CD14-positive monocyte (primary cell): ENCODE measurements at regions of chr16 and their contacts with region 1.

Region 1: GRCh38 chr16:89442990-89443731 is 47.2 kb downstream of the ANKRD11 start:
- DNase-seq: no peak
- H3K4me3 ChIP-seq: no peak overlapping the region
- H3K4me3 Mint-ChIP-seq: no peak overlapping the region
- H3K27ac ChIP-seq: peak overlapping the region in 1 of 2 donors; percentile 35
- H3K27ac Mint-ChIP-seq: peak overlapping the region in 6 of 7 donors; percentile 21 to 79 (median 71)
- H3K4me1 ChIP-seq: peaks cover 56 to 77% of the 10 kb centered on the region in 2 donors
- H3K4me1 Mint-ChIP-seq: peaks cover 88% of the 10 kb centered on the region
- H3K27me3 ChIP-seq: no peaks in the 10 kb centered on the region
- H3K27me3 Mint-ChIP-seq: peaks cover 0 to 2% (median 0%) of the 10 kb centered on the region in 3 donors
- CTCF ChIP-seq: no peak

Region 2: DNA sequence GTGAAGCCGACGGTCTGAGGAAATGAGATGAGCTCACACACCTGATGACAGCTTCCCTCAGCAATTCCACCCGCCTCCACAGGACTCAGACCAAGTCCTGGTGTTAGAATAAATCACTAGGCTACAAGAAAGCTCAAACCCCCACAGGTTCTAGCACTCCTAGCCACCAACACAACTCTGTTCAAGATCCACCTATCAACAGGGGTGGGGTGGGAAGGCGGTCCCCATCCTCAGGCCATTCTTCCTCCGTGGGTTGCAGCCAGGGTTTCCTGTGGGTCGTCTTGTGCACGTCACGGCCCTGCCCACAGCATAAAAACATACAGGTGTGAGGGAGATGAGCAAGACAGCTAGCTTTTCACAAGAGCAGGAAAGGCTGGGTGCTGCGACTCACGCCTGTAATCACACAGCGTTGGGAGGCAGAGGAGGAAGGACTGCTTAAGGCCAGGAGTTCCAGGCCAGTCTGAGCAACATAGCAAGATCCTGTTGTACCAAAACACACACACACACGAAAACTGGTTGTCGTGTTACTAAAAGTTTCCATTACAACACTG is 33.9 kb before region 1 on chr16:
- intact Hi-C with region 1: loop called in 1 of 2 experiments (anchors 5 kb)
- DNase-seq: no peak
- H3K4me3 ChIP-seq: no peak overlapping the region
- H3K4me3 Mint-ChIP-seq: no peak overlapping the region
- H3K27ac ChIP-seq: peak overlapping the region in 1 of 2 donors; percentile 58
- H3K27ac Mint-ChIP-seq: peak overlapping the region; percentile 35 to 89 (median 46)
- H3K4me1 ChIP-seq: peaks cover 39 to 54% of the 10 kb centered on the region in 2 donors
- H3K4me1 Mint-ChIP-seq: peaks cover 70% of the 10 kb centered on the region
- H3K27me3 ChIP-seq: no peaks in the 10 kb centered on the region
- H3K27me3 Mint-ChIP-seq: no peaks in the 10 kb centered on the region
- CTCF ChIP-seq: no peak

Region 3: GRCh38 chr16:89686520-89687091 is 243.4 kb after region 1 on chr16 and contains the start of gene CDK10:
- intact Hi-C with region 1: no loop called
- DNase-seq: peak; percentile 82 to 88 (median 82)
- H3K4me3 ChIP-seq: peak within 1 kb of the TSS; percentile 78 to 97 (median 89)
- H3K4me3 Mint-ChIP-seq: peak within 1 kb of the TSS; percentile 89 to 92
- H3K27ac ChIP-seq: peak within 1 kb of the TSS in 1 of 2 donors; percentile 44
- H3K27ac Mint-ChIP-seq: peak within 1 kb of the TSS; percentile 64 to 89 (median 76)
- H3K4me1 ChIP-seq: peaks cover 10 to 17% of the 10 kb centered on the region in 2 donors
- H3K4me1 Mint-ChIP-seq: peaks cover 9% of the 10 kb centered on the region
- H3K27me3 ChIP-seq: no peaks in the 10 kb centered on the region
- H3K27me3 Mint-ChIP-seq: peaks cover 0 to 2% (median 0%) of the 10 kb centered on the region in 3 donors
- CTCF ChIP-seq: no peak
- polyA plus RNA-seq, gene CDK10: 16.5 to 107 (median 18.3) TPM

Region 4: GRCh38 chr16:89931305-89931896 is 488.2 kb after region 1 on chr16:
- intact Hi-C with region 1: no loop called
- DNase-seq: no peak
- H3K4me3 ChIP-seq: no peak overlapping the region
- H3K4me3 Mint-ChIP-seq: no peak overlapping the region
- H3K27ac ChIP-seq: no peak overlapping the region
- H3K27ac Mint-ChIP-seq: no peak overlapping the region
- H3K4me1 ChIP-seq: peaks cover 1 to 4% of the 10 kb centered on the region in 2 donors
- H3K4me1 Mint-ChIP-seq: peaks cover 2% of the 10 kb centered on the region
- H3K27me3 ChIP-seq: no peaks in the 10 kb centered on the region
- H3K27me3 Mint-ChIP-seq: peaks cover 9 to 22% (median 21%) of the 10 kb centered on the region in 3 donors
- CTCF ChIP-seq: no peak